ENCODE measurements at regions of chr12 and their contacts with region 1.

Region 1: DNA sequence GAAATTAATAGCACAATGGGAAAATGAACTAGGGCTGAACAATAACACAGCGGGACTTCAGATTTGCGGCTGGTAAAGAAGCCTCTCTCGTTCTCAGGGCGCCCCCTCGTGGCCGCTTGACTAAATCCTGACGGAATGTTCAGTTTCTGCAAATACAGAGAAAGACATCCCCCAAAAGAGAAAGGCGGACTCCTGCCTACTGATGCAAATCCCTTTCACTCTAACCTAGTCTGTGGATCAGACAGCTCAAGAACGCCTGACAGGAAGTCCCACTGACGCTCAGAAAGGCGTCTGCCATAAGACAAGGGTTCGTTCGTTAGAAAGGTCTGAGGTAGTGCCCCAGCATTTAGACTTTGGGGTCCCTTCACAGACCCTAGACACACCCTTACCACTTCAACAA is 2.5 kb downstream of the NUAK1 start:
- DNase-seq: peak; percentile 91 to 92
- ATAC-seq: peak in 6 of 8 donors; percentile 0 to 66 (median 46)
- H3K4me3 ChIP-seq: peak overlapping the region; percentile 64 to 97 (median 88)
- H3K27ac ChIP-seq: peak overlapping the region; percentile 93 to 100 (median 98)
- H3K4me1 ChIP-seq: peaks cover 26 to 75% (median 61%) of the 10 kb centered on the region in 9 donors
- H3K27me3 ChIP-seq: peaks cover 0 to 54% (median 0%) of the 10 kb centered on the region in 7 donors
- CTCF ChIP-seq: peak; percentile 79 to 93 (median 87)

Region 2: GRCh38 chr12:105420659-105421240 is 715.5 kb before region 1 on chr12:
- intact Hi-C with region 1: loop called in 9 of 10 experiments (anchors 1 to 5 kb)
- DNase-seq: peak; percentile 59 to 78
- ATAC-seq: peak; percentile 76 to 94 (median 91)
- H3K4me3 ChIP-seq: no peak overlapping the region
- H3K27ac ChIP-seq: no peak overlapping the region
- H3K4me1 ChIP-seq: peaks cover 0 to 10% (median 0%) of the 10 kb centered on the region in 9 donors
- H3K27me3 ChIP-seq: no peaks in the 10 kb centered on the region
- CTCF ChIP-seq: peak; percentile 74 to 99 (median 93)

Region 3: GRCh38 chr12:105852951-105853350 is 283.3 kb before region 1 on chr12:
- intact Hi-C with region 1: loop called in 1 of 10 experiments (anchors 10 kb)
- DNase-seq: peak; percentile 20 to 69
- ATAC-seq: peak; percentile 78 to 94 (median 84)
- H3K4me3 ChIP-seq: peak overlapping the region in 4 of 10 donors; percentile 13 to 29 (median 18)
- H3K27ac ChIP-seq: peak overlapping the region in 8 of 10 donors; percentile 11 to 75 (median 50)
- H3K4me1 ChIP-seq: peaks cover 0 to 27% (median 5%) of the 10 kb centered on the region in 9 donors
- H3K27me3 ChIP-seq: no peaks in the 10 kb centered on the region
- CTCF ChIP-seq: no peak

Region 4: DNA sequence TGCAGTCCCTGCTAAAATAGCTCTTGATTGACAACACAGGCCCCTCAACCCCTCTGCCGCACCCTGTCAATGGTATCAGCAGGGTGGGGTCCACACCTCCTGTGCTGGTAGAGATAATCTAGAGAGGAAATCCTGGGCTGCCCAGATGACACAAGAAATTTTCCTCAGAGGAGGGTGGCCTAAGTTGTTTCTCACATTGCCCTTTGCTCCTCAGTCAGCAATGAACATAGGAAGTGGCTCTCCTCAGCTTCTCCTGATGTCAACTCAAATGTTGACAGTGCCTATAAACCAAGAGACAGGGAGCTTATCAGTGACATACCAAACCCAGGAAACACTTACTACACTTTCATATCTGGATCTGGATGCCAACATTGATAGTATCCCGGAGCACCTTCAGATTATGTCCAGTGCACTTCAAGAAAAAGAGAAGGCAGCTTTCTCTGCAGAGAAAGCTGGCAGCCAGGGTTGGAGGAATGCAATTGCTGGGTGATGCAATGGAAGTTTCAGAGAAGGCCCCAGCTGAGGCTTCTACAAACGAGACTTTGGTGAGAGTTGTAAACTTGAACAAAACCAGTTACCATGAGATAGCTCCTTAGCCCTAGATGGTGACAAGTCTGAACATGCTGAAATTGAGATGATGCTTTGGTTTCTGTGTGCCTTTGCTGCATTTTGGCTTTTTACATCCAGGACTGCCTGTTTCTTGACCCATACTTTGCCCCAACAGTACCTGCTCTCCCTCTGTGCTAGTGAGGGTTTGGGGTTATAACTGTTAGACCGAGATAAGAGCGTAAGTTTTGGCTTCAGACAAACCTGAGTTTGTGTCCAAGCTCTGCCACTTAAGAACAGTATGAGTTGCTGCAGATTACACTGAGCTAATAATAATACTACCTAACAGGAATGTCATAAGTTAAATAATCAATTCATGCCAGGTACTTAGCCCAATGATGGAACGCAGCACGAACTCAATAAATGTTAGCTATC is 181.0 kb before region 1 on chr12:
- intact Hi-C with region 1: loop called in 2 of 10 experiments (anchors 10 kb)
- DNase-seq: no peak
- ATAC-seq: peak in 5 of 8 donors; percentile 41 to 65 (median 55)
- H3K4me3 ChIP-seq: no peak overlapping the region
- H3K27ac ChIP-seq: peak overlapping the region in 6 of 10 donors; percentile 1 to 51 (median 28)
- H3K4me1 ChIP-seq: peaks cover 0 to 45% (median 19%) of the 10 kb centered on the region in 9 donors
- H3K27me3 ChIP-seq: no peaks in the 10 kb centered on the region
- CTCF ChIP-seq: no peak

Region 5: GRCh38 chr12:105986779-105987684 is 149.2 kb before region 1 on chr12:
- intact Hi-C with region 1: loop called in 1 of 10 experiments (anchors 10 kb)
- DNase-seq: no peak
- ATAC-seq: no peak
- H3K4me3 ChIP-seq: no peak overlapping the region
- H3K27ac ChIP-seq: no peak overlapping the region
- H3K4me1 ChIP-seq: peaks cover 0 to 11% (median 9%) of the 10 kb centered on the region in 9 donors
- H3K27me3 ChIP-seq: no peaks in the 10 kb centered on the region
- CTCF ChIP-seq: no peak

Region 6: DNA sequence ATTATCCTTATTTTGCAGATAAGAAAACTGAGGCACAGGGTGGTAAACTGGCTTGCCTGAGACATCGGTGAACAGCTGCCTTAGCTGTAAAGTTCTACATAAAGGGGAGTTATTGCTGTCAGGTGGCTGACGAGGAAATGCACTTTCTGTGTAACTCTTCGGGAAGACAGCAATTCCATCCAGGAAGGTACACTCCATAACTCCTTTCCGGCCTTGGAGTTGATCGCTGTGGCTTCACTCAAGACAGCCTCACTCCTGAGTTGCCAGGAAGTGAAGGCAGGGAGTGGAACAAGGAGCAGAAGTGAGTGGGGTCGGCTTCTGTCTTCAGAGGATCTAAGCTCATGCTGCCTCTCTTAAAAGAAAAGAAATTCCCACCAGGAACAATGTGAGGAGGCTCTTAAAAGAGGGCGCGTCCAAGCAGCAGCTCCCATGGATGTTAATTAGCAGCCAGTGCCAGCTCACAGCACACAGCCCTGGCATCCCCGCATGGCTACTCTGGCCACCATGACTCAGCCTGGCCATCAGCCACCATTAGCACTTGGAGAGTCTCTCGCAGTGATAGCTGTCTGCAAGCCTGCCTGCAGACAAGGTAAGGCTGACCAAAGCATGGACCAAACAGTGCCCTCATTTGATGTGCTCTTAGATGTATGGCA is 57.8 kb before region 1 on chr12:
- intact Hi-C with region 1: loop called in 3 of 10 experiments (anchors 5 to 10 kb)
- DNase-seq: peak; percentile 69 to 74
- ATAC-seq: peak; percentile 57 to 86 (median 78)
- H3K4me3 ChIP-seq: no peak overlapping the region
- H3K27ac ChIP-seq: peak overlapping the region in 7 of 10 donors; percentile 30 to 87 (median 85)
- H3K4me1 ChIP-seq: peaks cover 16 to 91% (median 67%) of the 10 kb centered on the region in 9 donors
- H3K27me3 ChIP-seq: no peaks in the 10 kb centered on the region
- CTCF ChIP-seq: no peak

Region 7: DNA sequence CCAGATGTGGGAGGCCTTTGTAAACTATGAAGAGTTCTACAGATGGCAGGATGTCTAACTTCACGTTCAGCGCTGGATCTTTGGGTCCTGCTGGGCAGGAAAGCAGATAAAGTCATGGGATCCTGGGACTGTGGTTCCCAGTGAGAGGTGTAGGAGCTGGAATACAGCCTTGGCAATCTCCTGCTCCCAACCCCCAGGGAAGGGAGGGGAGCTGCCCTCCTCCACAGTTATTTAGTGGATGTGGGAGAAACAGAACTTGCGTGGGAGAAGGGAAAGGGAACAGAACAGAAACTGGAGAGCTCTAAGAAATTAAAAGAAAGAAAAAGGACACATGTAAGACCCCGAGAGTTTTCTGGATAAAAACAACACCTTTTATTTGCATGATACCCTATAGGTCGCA is 34.5 kb before region 1 on chr12:
- intact Hi-C with region 1: loop called in 2 of 10 experiments (anchors 5 kb)
- DNase-seq: no peak
- ATAC-seq: peak in 6 of 8 donors; percentile 16 to 65 (median 42)
- H3K4me3 ChIP-seq: no peak overlapping the region
- H3K27ac ChIP-seq: peak overlapping the region in 6 of 10 donors; percentile 27 to 100 (median 86)
- H3K4me1 ChIP-seq: peaks cover 16 to 98% (median 85%) of the 10 kb centered on the region in 9 donors
- H3K27me3 ChIP-seq: no peaks in the 10 kb centered on the region
- CTCF ChIP-seq: no peak